Dendritic cell treated with granulocyte-macrophage colony-stimulating factor and Interleukin-4, amounts not matched to agents 40 ng/mL and 50 ng/mL, for 4 days (primary cell): ENCODE measurements at regions of chr2 and their contacts with region 1.

Region 1: DNA sequence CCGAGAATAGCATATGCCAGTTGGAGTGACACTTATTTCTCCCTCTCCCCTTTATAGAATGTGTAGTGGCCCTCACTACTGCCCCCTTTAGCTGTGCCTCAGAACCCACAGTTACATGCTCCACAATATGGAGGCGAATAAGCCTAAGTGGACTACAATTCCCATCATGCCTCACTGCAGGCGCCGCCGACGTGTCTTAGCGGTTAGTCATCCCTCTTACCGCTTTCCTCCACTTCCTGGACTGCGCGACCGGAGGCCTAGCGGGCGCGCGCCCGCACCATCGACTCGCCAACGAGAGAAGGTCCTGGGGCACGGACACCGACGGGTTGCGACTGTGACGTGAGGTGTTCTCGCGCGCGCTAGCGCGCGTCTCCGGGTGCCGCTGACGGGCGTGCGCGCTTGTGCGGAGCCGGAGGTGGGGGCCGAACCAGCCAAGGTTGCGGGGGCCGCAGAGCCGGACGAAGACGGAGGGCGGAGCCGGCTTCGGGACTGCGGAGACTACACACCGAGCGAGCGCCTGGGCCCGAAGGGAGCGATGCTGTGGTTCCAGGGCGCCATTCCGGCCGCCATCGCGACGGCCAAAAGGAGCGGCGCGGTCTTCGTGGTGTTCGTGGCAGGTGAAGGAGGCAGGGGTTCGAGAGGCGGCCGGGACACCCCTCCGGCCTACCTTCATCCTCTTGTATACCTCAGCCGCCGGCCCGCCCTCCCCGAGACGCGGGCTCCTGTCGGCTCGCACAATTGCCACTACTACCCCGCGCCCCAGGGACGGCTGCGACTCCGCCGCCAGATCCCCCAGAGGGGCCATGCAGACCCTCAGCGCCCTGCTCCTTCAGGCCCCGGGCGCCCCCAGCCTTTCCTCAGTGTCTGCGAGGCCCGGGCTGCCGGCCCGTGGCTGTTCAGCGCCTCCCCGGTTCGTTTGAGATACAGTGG is at the start of gene UBXN4:
- H3K4me3 Mint-ChIP-seq: peak within 1 kb of the TSS; percentile 94
- H3K27ac Mint-ChIP-seq: peak within 1 kb of the TSS; percentile 95
- H3K4me1 Mint-ChIP-seq: peaks cover 18% of the 10 kb centered on the region
- H3K27me3 Mint-ChIP-seq: no peaks in the 10 kb centered on the region

Region 2: GRCh38 chr2:135052042-135052876 is 689.4 kb before region 1 on chr2 and contains the start of gene RAB3GAP1:
- intact Hi-C with region 1: loop called (anchors 1 kb)
- H3K4me3 Mint-ChIP-seq: peak within 1 kb of the TSS; percentile 96
- H3K27ac Mint-ChIP-seq: peak within 1 kb of the TSS; percentile 100
- H3K4me1 Mint-ChIP-seq: peaks cover 28% of the 10 kb centered on the region
- H3K27me3 Mint-ChIP-seq: no peaks in the 10 kb centered on the region

Region 3: DNA sequence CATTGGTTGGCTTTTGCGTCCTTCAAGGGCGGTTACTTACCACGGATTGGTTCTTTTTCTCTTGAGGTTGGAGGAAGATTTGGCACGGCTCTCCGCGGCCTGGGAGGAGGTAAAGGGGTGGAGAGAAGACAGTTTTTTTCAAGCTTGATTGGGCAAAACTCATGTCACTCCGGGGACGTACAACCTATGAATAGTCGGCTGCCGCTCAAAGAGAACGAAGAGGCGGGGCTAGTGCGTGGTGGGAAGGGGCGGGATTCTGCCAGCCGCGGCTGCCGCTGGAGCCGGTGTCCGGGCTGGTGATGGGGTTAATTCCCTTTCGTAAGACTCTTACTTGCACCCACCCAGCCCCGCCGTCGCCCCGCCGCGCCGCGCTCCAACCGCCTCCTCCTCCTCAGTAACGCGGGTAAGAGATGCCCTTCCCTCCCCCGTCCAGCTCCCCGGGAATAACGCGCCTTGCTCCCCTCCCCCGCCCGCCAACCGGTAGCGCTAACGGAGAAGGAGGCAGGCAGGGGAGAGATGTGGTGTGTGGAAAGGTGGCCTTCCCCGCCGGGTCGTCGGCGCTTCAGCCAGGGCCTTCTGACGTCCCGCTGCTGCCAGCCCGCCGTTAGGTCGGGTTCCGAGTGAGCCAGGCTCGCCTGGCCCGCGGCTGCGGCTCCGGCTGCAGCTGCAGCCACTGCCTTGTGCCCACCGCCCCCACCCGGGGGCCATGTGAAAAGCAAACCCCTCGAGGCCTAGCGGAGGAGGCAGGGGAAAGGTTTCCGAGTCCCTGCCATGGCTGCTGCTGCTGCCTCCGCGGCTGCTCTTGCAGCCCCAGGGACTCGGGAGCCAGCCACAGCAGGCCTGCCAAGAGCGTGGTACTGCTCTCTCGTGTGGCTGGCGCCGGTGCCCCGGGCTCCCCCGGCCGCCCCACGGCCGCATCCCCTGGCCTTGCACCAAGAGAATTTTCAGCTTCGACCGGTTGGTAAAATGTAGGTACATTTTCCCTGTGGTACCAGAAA is 210.1 kb before region 1 on chr2 and contains the start of gene R3HDM1:
- intact Hi-C with region 1: loop called (anchors 1 kb)
- H3K4me3 Mint-ChIP-seq: no peak within 1 kb of the TSS
- H3K27ac Mint-ChIP-seq: no peak within 1 kb of the TSS
- H3K4me1 Mint-ChIP-seq: peaks cover 5% of the 10 kb centered on the region
- H3K27me3 Mint-ChIP-seq: no peaks in the 10 kb centered on the region

Region 4: DNA sequence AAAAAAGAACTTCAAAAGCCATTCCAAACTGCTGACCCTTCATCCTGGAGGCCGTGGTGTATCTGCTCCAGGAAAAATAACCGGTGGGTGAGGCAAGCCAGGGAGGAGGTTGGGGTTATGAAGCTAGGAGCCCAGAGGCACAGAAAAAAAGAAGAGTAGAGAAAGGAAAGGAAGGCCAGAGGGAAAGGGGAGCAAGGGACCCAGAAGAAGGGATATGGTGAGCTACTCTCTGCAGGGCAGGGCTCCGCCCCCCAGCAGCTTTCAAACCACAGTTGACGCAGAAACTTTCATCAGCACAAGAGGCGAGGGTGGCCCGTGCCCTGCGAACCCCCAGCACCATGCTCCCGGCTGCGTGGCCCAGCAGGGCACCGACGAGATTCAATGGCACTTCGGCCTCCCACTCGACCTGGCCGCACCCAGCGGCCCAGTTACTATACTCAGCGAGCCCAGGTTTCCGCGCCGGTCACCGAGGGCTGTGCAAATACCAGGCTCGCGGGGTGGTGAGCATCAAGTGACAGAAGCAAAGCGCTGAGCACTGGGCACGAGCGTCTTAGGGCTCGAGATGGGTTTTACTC is 133.9 kb after region 1 on chr2:
- intact Hi-C with region 1: loop called (anchors 2 kb)
- H3K4me3 Mint-ChIP-seq: peak overlapping the region; percentile 83
- H3K27ac Mint-ChIP-seq: peak overlapping the region; percentile 82
- H3K4me1 Mint-ChIP-seq: peaks cover 22% of the 10 kb centered on the region
- H3K27me3 Mint-ChIP-seq: no peaks in the 10 kb centered on the region

Region 5: GRCh38 chr2:136394136-136395060 is 652.7 kb after region 1 on chr2:
- intact Hi-C with region 1: loop called (anchors 10 kb)
- H3K4me3 Mint-ChIP-seq: no peak overlapping the region
- H3K27ac Mint-ChIP-seq: peak overlapping the region; percentile 67
- H3K4me1 Mint-ChIP-seq: peaks cover 39% of the 10 kb centered on the region
- H3K27me3 Mint-ChIP-seq: peaks cover 6% of the 10 kb centered on the region